Gastrocnemius medialis (tissue), 4 donors: ENCODE measurements at regions of chr1 and their contacts with region 1.

Region 1: GRCh38 chr1:147494998-147495580 is 46.2 kb upstream of the BCL9 start:
- DNase-seq: peak; percentile 32 to 59
- ATAC-seq: peak; percentile 92 to 95
- H3K4me3 ChIP-seq: no peak overlapping the region
- H3K27ac ChIP-seq: no peak overlapping the region
- H3K4me1 ChIP-seq: no peaks in the 10 kb centered on the region
- H3K27me3 ChIP-seq: no peaks in the 10 kb centered on the region
- CTCF ChIP-seq: peak; percentile 79 to 93 (median 81)
- POLR2A ChIP-seq: no peak

Region 2: DNA sequence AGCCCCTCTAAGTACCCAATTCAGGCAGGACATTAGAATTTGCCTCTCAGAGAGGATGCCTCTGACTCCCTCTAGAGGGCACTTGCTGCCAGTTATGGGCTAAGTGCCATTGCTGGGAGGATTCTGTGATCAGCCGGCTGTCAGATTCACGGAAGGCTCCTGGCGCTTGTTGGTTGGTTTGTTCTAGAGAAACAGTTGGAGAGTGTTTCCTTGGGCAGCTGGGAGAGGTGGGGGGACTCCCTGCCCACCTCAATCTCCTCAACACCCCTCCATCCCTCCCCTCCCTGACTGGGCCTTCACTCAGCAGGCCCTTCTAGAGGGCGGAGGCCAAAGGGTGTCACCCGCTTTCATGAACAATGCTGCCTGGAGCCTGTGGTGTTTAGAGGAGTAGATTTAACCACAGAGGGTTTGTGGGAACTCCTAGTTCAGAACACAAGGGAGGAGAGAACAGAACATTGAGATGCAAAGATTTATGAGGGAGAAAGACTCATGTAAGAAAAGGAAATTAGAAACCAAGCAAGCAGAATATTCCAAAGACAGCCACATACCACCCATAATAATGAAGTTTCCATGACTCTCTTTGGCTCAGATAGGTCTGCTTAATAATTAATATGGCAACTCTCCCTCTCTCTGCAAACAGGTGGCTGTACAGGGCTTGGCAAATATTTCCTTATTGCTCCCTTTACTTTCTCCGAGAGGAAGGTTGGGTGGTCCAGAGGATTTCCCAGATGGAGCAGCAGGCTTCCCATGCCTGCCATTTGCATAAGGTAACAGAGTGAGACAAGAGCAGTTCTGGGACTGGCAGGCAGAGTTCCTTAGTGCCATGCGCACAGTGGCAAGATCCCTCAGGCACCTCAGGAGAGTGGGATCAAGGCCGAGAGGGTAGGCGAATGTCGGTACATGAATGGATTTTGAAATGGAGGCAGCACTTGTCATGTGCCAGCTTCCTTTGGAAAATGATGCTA is 205.2 kb after region 1 on chr1:
- in situ Hi-C with region 1: no loop called
- intact Hi-C with region 1: loop called (anchors 2 kb)
- DNase-seq: peak; percentile 27 to 40
- ATAC-seq: peak; percentile 76 to 78
- H3K4me3 ChIP-seq: no peak overlapping the region
- H3K27ac ChIP-seq: no peak overlapping the region
- H3K4me1 ChIP-seq: no peaks in the 10 kb centered on the region
- H3K27me3 ChIP-seq: no peaks in the 10 kb centered on the region
- CTCF ChIP-seq: peak; percentile 49 to 80 (median 69)
- POLR2A ChIP-seq: no peak